WTC11 (cell line): ENCODE measurements at regions of chr3 and their contacts with region 1.

Region 1: GRCh38 chr3:52481819-52482521 is 13.2 kb upstream of the STAB1 start:
- DNase-seq: peak; percentile 89
- ATAC-seq: peak; percentile 87
- H3K4me3 Mint-ChIP-seq: no peak overlapping the region
- H3K27ac Mint-ChIP-seq: peak overlapping the region; percentile 82
- H3K4me1 Mint-ChIP-seq: no peaks in the 10 kb centered on the region
- H3K27me3 Mint-ChIP-seq: no peaks in the 10 kb centered on the region
- CTCF ChIP-seq: peak; percentile 93

Region 2: GRCh38 chr3:52471371-52472238 is 10.4 kb before region 1 on chr3:
- CTCF ChIA-PET with region 1: interaction called, 12 read pairs
- POLR2A ChIA-PET with region 1: no interaction called
- DNase-seq: peak; percentile 64
- ATAC-seq: peak; percentile 90
- H3K4me3 Mint-ChIP-seq: no peak overlapping the region
- H3K27ac Mint-ChIP-seq: 0 out of 2 replicates have a peak overlapping the region, but pooled peaks have one; percentile 23
- H3K4me1 Mint-ChIP-seq: no peaks in the 10 kb centered on the region
- H3K27me3 Mint-ChIP-seq: no peaks in the 10 kb centered on the region
- CTCF ChIP-seq: peak; percentile 70

Region 3: DNA sequence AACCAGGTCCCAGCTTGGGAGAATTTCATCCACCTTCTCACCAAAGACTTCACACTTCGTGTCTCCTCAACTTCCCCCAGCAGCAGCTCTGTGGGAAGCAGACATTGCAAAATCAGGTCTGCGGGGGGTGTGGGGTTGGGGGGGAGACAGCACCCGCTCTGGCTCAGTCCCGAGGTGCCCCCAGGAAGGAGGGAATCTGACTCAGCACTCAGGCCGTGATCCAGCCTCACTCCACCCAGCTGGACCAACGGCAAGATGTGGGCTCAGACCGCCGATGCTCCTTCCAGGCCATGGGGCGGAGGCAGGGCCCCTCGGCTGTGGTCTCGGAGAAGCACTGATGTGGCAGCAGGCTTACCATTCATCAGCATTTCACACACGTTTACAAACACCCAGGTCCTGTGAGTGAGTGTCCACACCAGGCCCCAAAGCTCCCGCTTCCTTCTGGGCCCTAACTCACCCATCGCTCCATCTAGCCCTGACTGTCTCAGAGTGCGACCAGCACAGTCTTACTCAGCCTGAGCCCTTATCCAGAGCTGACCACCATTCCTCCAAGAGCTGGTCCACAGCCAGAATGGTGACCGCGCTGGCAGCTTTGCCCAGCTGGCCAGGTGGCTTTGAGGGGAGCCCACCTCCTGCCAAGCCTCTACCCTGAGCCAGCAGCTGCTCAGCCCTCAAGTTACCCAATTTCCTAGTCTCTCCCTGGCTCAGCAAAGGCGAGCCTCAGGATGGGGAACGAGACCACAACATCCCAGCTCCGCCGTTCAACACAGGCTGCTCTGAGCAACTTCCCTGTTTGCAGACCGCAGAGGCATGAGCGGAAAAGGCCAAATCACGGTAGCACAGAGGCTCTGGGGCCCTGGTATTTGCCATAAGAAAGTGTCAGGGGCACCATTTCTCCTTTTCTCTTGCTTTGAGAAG is 16.4 kb after region 1 on chr3:
- CTCF ChIA-PET with region 1: interaction called, 12 read pairs
- POLR2A ChIA-PET with region 1: no interaction called
- DNase-seq: no peak
- ATAC-seq: no peak
- H3K4me3 Mint-ChIP-seq: no peak overlapping the region
- H3K27ac Mint-ChIP-seq: no peak overlapping the region
- H3K4me1 Mint-ChIP-seq: no peaks in the 10 kb centered on the region
- H3K27me3 Mint-ChIP-seq: no peaks in the 10 kb centered on the region
- CTCF ChIP-seq: no peak

Region 4: DNA sequence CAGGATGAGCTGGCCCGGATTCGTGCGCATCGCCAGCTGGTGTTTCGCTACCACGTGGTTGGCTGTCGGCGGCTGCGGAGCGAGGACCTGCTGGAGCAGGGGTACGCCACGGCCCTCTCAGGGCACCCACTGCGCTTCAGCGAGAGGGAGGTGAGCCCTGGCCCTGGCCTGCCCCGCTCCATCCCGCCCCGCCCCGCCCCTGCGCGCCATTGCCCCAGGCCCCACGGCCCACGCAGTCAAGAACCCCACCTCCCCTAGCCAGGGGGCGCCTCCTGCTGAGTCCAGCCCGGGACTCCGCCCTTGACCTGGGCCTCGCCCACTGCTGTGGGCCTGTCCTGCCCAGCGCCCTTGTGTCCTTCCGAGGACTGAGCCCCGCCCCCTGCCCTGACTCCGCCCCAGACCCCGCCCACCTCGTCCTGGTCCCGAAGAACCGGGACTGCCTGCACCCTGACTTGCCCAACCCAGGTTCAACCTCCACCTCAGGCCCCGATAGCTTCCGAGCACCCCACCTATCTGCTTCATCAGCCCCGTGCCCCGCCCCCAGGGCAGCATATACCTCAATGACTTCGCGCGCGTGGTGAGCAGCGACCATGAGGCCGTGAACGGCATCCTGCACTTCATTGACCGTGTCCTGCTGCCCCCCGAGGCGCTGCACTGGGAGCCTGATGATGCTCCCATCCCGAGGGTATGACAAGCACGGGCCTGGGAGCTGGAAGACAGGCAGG is 36.9 kb after region 1 on chr3:
- CTCF ChIA-PET with region 1: interaction called, 12 read pairs
- POLR2A ChIA-PET with region 1: no interaction called
- DNase-seq: peak; percentile 78
- ATAC-seq: peak; percentile 81
- H3K4me3 Mint-ChIP-seq: peak overlapping the region; percentile 73
- H3K27ac Mint-ChIP-seq: 0 out of 2 replicates have a peak overlapping the region, but pooled peaks have one; percentile 45
- H3K4me1 Mint-ChIP-seq: peaks cover 7% of the 10 kb centered on the region
- H3K27me3 Mint-ChIP-seq: no peaks in the 10 kb centered on the region; the same call in 1 of the 2 replicates
- CTCF ChIP-seq: no peak

Region 5: GRCh38 chr3:52561028-52561747 is 79.2 kb after region 1 on chr3:
- CTCF ChIA-PET with region 1: no interaction called
- POLR2A ChIA-PET with region 1: no interaction called
- DNase-seq: no peak
- ATAC-seq: no peak
- H3K4me3 Mint-ChIP-seq: no peak overlapping the region
- H3K27ac Mint-ChIP-seq: no peak overlapping the region
- H3K4me1 Mint-ChIP-seq: peaks cover 10% of the 10 kb centered on the region
- H3K27me3 Mint-ChIP-seq: no peaks in the 10 kb centered on the region
- CTCF ChIP-seq: no peak